ENCODE measurements at regions of chr6 and their contacts with region 1.

Region 1: GRCh38 chr6:99425647-99426453 is 742 bp upstream of the PNISR start:
- DNase-seq: peak; percentile 27 to 79 (median 49)
- ATAC-seq: peak; percentile 44
- H3K4me3 ChIP-seq: peak overlapping the region; percentile 72
- H3K4me3 Mint-ChIP-seq: peak overlapping the region; percentile 100
- H3K27ac ChIP-seq: peak overlapping the region; percentile 99
- H3K27ac Mint-ChIP-seq: peak overlapping the region; percentile 97
- H3K4me1 ChIP-seq: peaks cover 32% of the 10 kb centered on the region
- H3K4me1 Mint-ChIP-seq: peaks cover 58% of the 10 kb centered on the region
- H3K27me3 ChIP-seq: no peaks in the 10 kb centered on the region
- H3K27me3 Mint-ChIP-seq: no peaks in the 10 kb centered on the region
- CTCF ChIP-seq: no peak

Region 2: DNA sequence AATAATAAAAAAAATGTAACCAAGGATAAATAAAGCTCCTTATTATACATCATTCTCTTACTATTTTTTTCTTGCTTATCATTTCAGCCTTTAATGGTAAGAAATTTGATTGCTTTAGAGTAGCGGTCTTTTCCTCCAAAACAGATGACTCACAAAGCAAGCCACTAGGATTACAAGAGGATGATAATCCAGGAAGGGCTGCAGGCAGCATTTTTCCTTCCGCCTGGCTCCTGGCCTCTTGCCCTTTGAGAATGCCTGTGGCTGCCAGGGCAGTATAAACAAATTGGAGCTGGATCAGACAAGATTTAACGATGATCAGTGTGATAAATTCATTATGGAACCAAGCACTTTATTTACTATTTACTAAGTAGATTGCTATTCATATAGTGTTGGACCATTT is 468.4 kb before region 1 on chr6:
- CTCF ChIA-PET with region 1: no interaction called
- POLR2A ChIA-PET with region 1: no interaction called
- intact Hi-C with region 1: loop called in 1 of 2 experiments (anchors 10 kb)
- DNase-seq: no peak
- ATAC-seq: no peak
- H3K4me3 ChIP-seq: no peak overlapping the region
- H3K4me3 Mint-ChIP-seq: no peak overlapping the region
- H3K27ac ChIP-seq: no peak overlapping the region
- H3K27ac Mint-ChIP-seq: no peak overlapping the region
- H3K4me1 ChIP-seq: no peaks in the 10 kb centered on the region
- H3K4me1 Mint-ChIP-seq: no peaks in the 10 kb centered on the region
- H3K27me3 ChIP-seq: peaks cover 0 to 1% of the 10 kb centered on the region in 2 experiments
- H3K27me3 Mint-ChIP-seq: peaks cover 11% of the 10 kb centered on the region
- CTCF ChIP-seq: no peak

Region 3: GRCh38 chr6:99393698-99394531 is 31.9 kb before region 1 on chr6 and contains the start of gene COQ3:
- CTCF ChIA-PET with region 1: no interaction called
- POLR2A ChIA-PET with region 1: interaction called, 50 read pairs
- intact Hi-C with region 1: loop called in 1 of 2 experiments (anchors 1 kb)
- DNase-seq: peak; percentile 33 to 76 (median 52)
- ATAC-seq: peak; percentile 73
- H3K4me3 ChIP-seq: peak within 1 kb of the TSS; percentile 79
- H3K4me3 Mint-ChIP-seq: peak within 1 kb of the TSS; percentile 95
- H3K27ac ChIP-seq: no peak within 1 kb of the TSS
- H3K27ac Mint-ChIP-seq: peak within 1 kb of the TSS; percentile 84
- H3K4me1 ChIP-seq: peaks cover 4% of the 10 kb centered on the region
- H3K4me1 Mint-ChIP-seq: peaks cover 28% of the 10 kb centered on the region
- H3K27me3 ChIP-seq: no peaks in the 10 kb centered on the region
- H3K27me3 Mint-ChIP-seq: no peaks in the 10 kb centered on the region
- CTCF ChIP-seq: no peak
- total RNA-seq, gene COQ3: 1.8 to 2.2 TPM

Region 4: DNA sequence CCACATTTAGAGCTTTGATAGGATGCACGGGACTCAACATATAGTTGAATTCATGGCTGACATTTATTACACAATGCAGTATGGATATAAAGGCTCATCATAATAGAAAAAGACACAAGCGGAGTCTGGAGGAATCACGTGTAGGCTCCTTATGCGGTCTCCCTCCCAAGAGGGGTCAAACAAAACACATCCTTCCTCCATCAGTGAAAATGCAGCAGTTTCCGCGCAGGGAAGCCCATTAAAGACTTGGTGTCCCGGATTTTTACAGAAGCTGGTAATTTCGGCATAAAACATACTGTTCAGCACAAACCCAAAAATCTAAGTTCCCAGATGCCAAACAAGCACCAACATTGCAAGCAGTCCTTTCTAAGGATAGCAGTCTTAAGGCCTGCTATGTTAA is 88.2 kb after region 1 on chr6:
- CTCF ChIA-PET with region 1: no interaction called
- POLR2A ChIA-PET with region 1: interaction called, 22 read pairs
- intact Hi-C with region 1: loop called (anchors 2 to 5 kb)
- DNase-seq: no peak
- ATAC-seq: no peak
- H3K4me3 ChIP-seq: peak overlapping the region; percentile 78
- H3K4me3 Mint-ChIP-seq: peak overlapping the region; percentile 97
- H3K27ac ChIP-seq: no peak overlapping the region
- H3K27ac Mint-ChIP-seq: peak overlapping the region; percentile 72
- H3K4me1 ChIP-seq: peaks cover 8% of the 10 kb centered on the region
- H3K4me1 Mint-ChIP-seq: peaks cover 32% of the 10 kb centered on the region
- H3K27me3 ChIP-seq: no peaks in the 10 kb centered on the region
- H3K27me3 Mint-ChIP-seq: no peaks in the 10 kb centered on the region
- CTCF ChIP-seq: no peak

Region 5: DNA sequence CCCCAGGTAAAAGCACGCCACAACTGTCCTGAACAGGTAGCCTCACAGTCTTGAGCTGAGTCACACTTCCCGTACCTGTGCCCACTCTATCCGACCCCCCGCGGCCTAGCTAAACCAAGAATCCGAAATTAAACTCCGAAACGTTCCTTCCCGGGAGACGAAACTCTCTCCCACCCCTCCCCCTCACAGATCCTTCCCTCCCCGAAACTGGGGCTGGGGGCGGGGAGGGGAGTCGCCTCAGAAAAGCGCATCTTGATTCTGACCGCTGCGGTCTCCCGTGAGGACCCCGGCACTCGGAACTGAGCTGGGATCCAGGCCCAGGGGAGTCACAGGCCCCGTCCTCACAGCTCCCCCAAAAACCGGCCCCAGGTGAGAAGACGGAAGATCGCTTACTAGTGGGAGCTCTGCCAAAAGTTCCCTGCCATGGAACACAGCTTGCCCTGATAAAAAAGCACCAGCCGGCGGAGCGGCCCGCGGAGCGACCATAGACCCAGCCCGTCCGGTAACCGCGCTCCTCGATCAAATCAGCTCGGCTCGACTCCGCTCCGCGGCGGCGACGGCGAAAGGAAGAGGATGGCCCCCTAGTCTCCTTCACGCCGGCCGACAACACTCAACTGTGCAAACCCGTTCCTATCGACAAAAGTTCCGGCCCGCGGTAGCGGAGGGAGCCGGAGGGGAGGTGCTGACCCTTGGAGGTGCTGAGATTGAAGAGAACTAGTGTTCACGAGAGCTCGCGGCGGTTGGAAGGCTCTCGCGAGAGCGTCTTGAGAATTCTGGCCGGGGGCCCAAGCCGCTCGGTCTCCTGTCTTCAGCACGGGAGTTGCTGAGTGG is 142.5 kb after region 1 on chr6 and contains the start of gene CCNC:
- CTCF ChIA-PET with region 1: interaction called, 3 read pairs
- POLR2A ChIA-PET with region 1: interaction called, 37 read pairs
- intact Hi-C with region 1: loop called (anchors 1 to 5 kb)
- DNase-seq: peak; percentile 78 to 94 (median 88)
- ATAC-seq: peak; percentile 90
- H3K4me3 ChIP-seq: peak within 1 kb of the TSS; percentile 88
- H3K4me3 Mint-ChIP-seq: peak within 1 kb of the TSS; percentile 97
- H3K27ac ChIP-seq: peak within 1 kb of the TSS in 1 of 2 donors; percentile 57
- H3K27ac Mint-ChIP-seq: peak within 1 kb of the TSS; percentile 91
- H3K4me1 ChIP-seq: peaks cover 9% of the 10 kb centered on the region
- H3K4me1 Mint-ChIP-seq: peaks cover 47% of the 10 kb centered on the region
- H3K27me3 ChIP-seq: no peaks in the 10 kb centered on the region
- H3K27me3 Mint-ChIP-seq: no peaks in the 10 kb centered on the region
- CTCF ChIP-seq: no peak
- total RNA-seq, gene CCNC: 40.5 to 42.6 TPM

Region 6: DNA sequence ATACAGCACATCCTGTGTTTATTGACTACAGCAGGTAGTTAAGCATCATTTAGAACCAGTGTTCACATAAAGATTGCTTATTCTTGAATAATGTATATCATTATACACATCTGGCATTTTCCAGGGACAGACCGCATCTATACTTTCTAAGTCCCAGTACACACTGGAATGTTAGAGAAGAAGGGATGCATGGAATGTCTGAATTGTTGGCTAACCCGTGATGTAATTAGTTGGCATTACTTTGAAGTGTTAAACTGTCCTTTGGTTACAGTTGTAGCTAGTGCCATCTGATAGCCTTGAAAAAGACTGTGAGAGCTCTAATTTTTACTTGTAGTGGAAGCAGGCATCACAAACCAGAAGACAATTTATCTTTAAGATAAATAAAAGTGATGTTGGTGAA is 597.9 kb after region 1 on chr6:
- CTCF ChIA-PET with region 1: no interaction called
- POLR2A ChIA-PET with region 1: no interaction called
- intact Hi-C with region 1: no loop called
- DNase-seq: no peak
- ATAC-seq: no peak
- H3K4me3 ChIP-seq: no peak overlapping the region
- H3K4me3 Mint-ChIP-seq: no peak overlapping the region
- H3K27ac ChIP-seq: no peak overlapping the region
- H3K27ac Mint-ChIP-seq: no peak overlapping the region
- H3K4me1 ChIP-seq: no peaks in the 10 kb centered on the region
- H3K4me1 Mint-ChIP-seq: no peaks in the 10 kb centered on the region
- H3K27me3 ChIP-seq: no peaks in the 10 kb centered on the region
- H3K27me3 Mint-ChIP-seq: no peaks in the 10 kb centered on the region
- CTCF ChIP-seq: no peak

Measured in CD4-positive, alpha-beta T cell (primary cell).